ENCODE measurements at regions of chr11 and their contacts with region 1.

Region 1: GRCh38 chr11:70191495-70192140 is 11.5 kb upstream of the FADD start:
- DNase-seq: peak in 6 of 9 donors; percentile 11 to 68 (median 29)
- ATAC-seq: peak; percentile 62
- H3K4me3 ChIP-seq: no peak overlapping the region
- H3K4me3 Mint-ChIP-seq: no peak overlapping the region
- H3K27ac ChIP-seq: no peak overlapping the region
- H3K27ac Mint-ChIP-seq: no peak overlapping the region
- H3K4me1 ChIP-seq: no peaks in the 10 kb centered on the region
- H3K4me1 Mint-ChIP-seq: peaks cover 0 to 6% (median 0%) of the 10 kb centered on the region in 7 donors
- H3K27me3 ChIP-seq: no peaks in the 10 kb centered on the region
- H3K27me3 Mint-ChIP-seq: peaks cover 0 to 12% (median 8%) of the 10 kb centered on the region in 5 donors

Region 2: DNA sequence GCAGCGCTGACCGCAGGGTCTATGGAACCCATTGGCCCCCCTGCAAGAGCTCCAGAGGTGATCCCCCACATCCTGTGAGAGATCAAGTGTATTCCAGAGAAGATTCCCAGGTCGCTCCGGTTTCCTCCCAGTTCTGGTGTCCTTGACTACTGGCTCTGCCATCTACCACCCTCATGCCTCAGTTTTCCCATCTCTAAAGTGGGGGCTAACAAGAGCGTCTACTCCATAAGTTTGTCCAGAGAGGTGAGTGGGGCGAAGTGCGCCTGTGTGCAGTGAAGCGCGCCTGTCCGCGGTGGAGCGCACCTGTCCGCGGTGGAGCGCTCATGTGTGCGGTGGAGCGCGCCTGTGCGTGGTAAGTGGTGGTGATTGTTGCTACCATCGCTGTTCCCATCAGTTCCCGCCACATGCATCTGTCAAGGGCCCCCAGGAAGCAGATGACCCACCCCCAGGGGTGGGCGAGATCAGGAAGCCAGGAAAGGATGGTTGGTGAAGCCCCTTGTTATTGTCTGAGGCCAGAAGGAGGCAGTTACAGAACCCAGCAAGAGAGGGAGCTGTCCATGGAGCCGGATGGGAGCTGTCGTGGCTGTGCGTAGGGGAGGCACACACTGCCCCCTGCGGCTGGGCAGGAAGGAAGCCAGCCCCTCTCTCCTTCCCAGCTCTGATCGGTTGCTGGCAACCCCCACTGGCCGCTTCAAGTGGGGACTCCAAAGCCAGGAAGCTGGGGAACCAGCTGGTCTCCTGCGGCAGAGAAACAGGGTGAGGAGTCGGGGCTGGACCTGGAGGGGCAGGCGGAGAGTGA is 299.2 kb before region 1 on chr11:
- CTCF ChIA-PET with region 1: no interaction called
- POLR2A ChIA-PET with region 1: no interaction called
- intact Hi-C with region 1: no loop called
- DNase-seq: no peak
- ATAC-seq: no peak
- H3K4me3 ChIP-seq: no peak overlapping the region
- H3K4me3 Mint-ChIP-seq: no peak overlapping the region
- H3K27ac ChIP-seq: no peak overlapping the region
- H3K27ac Mint-ChIP-seq: no peak overlapping the region
- H3K4me1 ChIP-seq: no peaks in the 10 kb centered on the region
- H3K4me1 Mint-ChIP-seq: peaks cover 0 to 5% (median 0%) of the 10 kb centered on the region in 7 donors
- H3K27me3 ChIP-seq: no peaks in the 10 kb centered on the region
- H3K27me3 Mint-ChIP-seq: peaks cover 17 to 62% (median 39%) of the 10 kb centered on the region in 5 donors

Region 3: DNA sequence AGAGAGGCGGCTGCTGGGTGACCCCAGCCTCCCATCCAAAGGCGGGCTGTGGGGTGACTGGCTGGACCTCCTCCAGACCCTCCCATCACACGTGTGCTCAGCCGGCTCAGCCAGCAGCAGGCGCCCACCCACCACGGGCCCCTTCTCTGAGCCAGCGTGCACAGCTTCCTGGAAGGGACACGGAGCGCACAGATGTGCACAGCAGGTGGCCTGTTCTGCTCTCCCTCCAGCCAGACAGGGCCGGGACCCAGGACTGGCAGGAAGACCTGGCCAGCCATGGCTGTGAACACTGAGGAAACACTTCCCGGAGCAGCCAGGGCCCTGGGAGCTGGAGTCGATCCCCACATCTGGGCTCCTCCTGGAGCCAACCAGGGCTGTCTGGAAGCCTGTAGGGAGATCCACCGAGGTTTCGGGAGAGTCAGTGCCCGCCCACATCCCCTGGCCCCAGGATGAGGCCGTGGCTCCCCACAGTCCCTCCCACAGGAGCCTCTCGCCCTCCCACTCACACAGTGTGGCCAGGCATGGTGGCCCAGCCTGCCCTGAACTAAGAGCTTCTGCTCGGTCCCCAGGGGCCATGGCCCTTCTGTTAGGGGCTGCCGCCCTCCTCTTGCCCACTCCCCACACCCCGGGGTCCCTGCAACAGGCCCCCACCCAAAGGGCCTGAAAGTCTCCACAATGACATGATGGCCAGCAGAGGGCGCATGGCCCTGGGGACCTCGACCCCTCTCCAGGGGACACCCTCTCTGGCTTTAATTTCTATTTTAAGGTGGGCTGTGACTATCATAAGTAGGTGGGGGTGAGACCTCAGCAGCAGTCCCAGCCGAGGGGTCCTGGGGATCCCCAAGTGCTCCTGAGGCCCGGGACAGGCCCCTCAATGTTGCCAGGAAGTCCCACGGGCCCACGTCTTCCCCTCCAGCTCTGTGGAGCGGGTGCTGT is 281.8 kb before region 1 on chr11:
- CTCF ChIA-PET with region 1: interaction called, 4 read pairs
- POLR2A ChIA-PET with region 1: no interaction called
- intact Hi-C with region 1: loop called in 1 of 2 experiments (anchors 1 kb)
- DNase-seq: no peak
- ATAC-seq: no peak
- H3K4me3 ChIP-seq: no peak overlapping the region
- H3K4me3 Mint-ChIP-seq: no peak overlapping the region
- H3K27ac ChIP-seq: no peak overlapping the region
- H3K27ac Mint-ChIP-seq: no peak overlapping the region
- H3K4me1 ChIP-seq: no peaks in the 10 kb centered on the region
- H3K4me1 Mint-ChIP-seq: no peaks in the 10 kb centered on the region
- H3K27me3 ChIP-seq: peaks cover 0 to 4% of the 10 kb centered on the region in 2 donors
- H3K27me3 Mint-ChIP-seq: peaks cover 0 to 66% (median 21%) of the 10 kb centered on the region in 5 donors

Region 4: DNA sequence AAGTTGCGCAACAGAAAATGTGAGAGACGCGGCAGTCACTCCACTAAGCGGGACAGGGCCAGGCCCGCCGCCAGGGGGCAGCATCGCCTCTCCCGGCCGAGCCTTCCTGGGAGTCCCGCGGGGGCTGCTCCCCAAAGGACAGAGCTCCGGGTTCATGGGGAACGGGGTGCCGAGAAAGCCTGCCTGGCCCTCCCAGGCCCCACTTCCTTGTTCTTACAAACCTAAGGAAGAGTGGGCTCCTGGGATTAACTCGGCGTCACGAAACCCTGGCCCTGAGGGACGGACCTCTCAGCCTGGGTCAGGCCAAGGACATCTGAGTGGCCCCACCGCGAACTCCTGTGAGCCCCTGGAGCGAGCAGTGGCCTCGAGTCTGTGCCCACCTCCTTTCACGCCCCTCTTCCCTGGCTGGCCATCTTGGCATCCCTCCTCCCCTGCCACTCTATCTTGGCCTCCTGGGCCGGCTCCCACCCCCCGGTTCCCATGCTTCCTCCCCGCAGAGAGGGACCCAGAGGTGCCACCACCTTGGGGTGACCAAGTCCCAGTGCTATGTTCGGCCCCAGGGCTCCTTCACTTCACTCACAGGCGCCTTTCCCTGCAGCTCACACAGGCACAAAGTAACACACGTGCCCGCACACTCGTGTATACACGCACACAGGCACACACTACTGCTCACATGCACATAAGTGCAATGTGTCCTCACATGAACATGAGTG is 272.5 kb before region 1 on chr11:
- CTCF ChIA-PET with region 1: interaction called, 8 read pairs
- POLR2A ChIA-PET with region 1: no interaction called
- intact Hi-C with region 1: loop called (anchors 1 kb)
- DNase-seq: peak; percentile 25 to 83 (median 56)
- ATAC-seq: peak; percentile 65
- H3K4me3 ChIP-seq: no peak overlapping the region
- H3K4me3 Mint-ChIP-seq: no peak overlapping the region
- H3K27ac ChIP-seq: no peak overlapping the region
- H3K27ac Mint-ChIP-seq: no peak overlapping the region
- H3K4me1 ChIP-seq: no peaks in the 10 kb centered on the region
- H3K4me1 Mint-ChIP-seq: peaks cover 0 to 5% (median 0%) of the 10 kb centered on the region in 7 donors
- H3K27me3 ChIP-seq: no peaks in the 10 kb centered on the region
- H3K27me3 Mint-ChIP-seq: peaks cover 13 to 66% (median 36%) of the 10 kb centered on the region in 5 donors

Region 5: GRCh38 chr11:70281156-70281609 is 89.6 kb after region 1 on chr11:
- CTCF ChIA-PET with region 1: no interaction called
- POLR2A ChIA-PET with region 1: no interaction called
- intact Hi-C with region 1: no loop called
- DNase-seq: no peak
- ATAC-seq: no peak
- H3K4me3 ChIP-seq: no peak overlapping the region
- H3K4me3 Mint-ChIP-seq: no peak overlapping the region
- H3K27ac ChIP-seq: no peak overlapping the region
- H3K27ac Mint-ChIP-seq: peak overlapping the region in 2 of 9 donors; percentile 9 to 26
- H3K4me1 ChIP-seq: no peaks in the 10 kb centered on the region
- H3K4me1 Mint-ChIP-seq: peaks cover 6 to 51% (median 40%) of the 10 kb centered on the region in 7 donors
- H3K27me3 ChIP-seq: no peaks in the 10 kb centered on the region
- H3K27me3 Mint-ChIP-seq: no peaks in the 10 kb centered on the region